Activated T-helper 2 cell treated with anti-CD3 and anti-CD28 coated beads, Interferon-gamma antibody, Interleukin-2, Interleukin-4, amounts not matched to agents 10 μg/mL and 5 μg/mL and 100 μg/mL, durations not matched to agents 14 hours and 24 hours and 36 hours (primary cell): ENCODE measurements at regions of chr1 and their contacts with region 1.

Region 1: DNA sequence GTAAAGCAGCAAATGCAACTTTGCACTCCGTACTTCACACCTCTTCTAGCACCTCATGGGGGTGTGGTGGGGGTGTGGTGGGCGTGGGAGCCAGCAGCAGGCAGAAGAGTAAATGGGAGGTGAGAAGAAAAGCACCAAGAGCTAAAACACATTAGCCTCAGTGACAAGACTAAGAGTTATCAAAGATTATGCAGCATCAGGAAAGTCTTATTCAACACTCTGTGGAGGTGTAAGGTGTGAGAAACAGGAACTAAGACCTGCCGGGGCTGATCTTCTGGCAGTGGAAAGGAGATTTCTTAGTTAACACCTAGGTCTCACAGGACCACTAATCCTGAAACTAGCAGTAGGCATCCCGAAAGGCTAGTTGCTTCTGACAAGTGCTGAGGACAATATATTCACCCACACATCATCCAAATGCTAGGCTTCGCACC is 9.9 kb downstream of the TGFBR3 start:
- DNase-seq: no peak
- H3K4me3 Mint-ChIP-seq: no peak overlapping the region
- H3K27ac Mint-ChIP-seq: peak overlapping the region; percentile 32
- H3K4me1 Mint-ChIP-seq: peaks cover 69% of the 10 kb centered on the region
- H3K27me3 Mint-ChIP-seq: peaks cover 2% of the 10 kb centered on the region

Region 2: DNA sequence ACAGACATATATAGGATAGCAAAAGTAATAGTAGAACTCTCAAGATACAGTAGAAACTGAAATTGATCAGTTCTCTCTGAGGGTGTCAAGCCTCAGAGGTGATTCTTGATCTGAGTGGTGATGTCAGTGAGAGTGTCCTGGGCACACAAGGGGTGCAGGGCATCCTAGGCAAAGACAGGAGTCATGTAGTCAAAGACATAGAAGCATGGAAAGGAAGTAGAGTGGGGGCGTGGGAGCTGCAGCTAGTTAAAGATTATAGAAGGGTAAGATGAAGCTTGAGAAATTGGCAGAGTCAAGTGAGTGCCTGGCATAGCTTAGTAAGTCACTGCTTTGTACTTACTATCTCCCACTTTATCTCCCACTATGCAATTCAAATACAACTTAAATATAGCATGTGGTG is 352.6 kb before region 1 on chr1:
- intact Hi-C with region 1: loop called (anchors 1 kb)
- DNase-seq: no peak
- H3K4me3 Mint-ChIP-seq: no peak overlapping the region
- H3K27ac Mint-ChIP-seq: peak overlapping the region; percentile 38
- H3K4me1 Mint-ChIP-seq: peaks cover 47% of the 10 kb centered on the region
- H3K27me3 Mint-ChIP-seq: no peaks in the 10 kb centered on the region

Region 3: GRCh38 chr1:91673613-91674012 is 202.4 kb before region 1 on chr1:
- intact Hi-C with region 1: loop called (anchors 2 kb)
- DNase-seq: no peak
- H3K4me3 Mint-ChIP-seq: no peak overlapping the region
- H3K27ac Mint-ChIP-seq: peak overlapping the region; percentile 71
- H3K4me1 Mint-ChIP-seq: peaks cover 33% of the 10 kb centered on the region
- H3K27me3 Mint-ChIP-seq: no peaks in the 10 kb centered on the region

Region 4: DNA sequence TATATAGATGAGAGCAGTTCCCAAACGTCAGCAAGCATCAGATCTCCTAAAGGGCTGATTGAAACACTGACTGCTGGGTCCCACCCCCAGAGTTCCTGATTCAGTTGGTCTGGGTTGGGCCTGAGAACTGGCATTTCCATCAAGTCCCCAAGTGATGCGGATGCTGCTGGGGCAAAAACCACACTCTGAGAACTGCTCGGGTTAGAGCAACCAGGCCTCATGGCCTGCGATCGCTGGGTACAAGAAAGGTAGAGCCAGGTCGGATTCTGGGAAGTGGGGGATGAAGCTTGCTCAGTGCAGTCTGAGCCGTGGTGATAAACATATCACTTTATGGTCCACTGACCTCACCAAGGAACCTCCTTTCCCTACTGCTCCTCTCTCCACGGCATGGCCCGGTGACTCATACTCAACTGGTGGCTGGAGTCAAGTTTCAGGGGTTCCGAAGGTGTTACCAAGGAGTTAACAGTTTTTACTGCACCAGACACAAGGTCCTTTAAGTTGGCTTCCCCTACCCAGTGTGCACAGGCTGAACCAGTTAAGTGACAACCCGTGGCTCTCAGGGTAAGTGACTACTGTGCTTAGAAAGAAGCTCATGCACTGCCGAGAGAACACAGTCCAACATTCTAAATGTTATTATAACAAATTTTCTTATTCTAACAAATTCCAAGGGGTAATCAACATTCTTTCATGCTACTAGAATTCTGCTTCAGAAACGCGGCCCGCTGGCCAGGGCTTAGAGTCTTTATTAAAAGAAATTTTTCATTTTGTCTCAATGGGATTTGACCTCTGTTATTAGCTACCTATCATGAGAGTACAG is 143.6 kb before region 1 on chr1:
- intact Hi-C with region 1: loop called (anchors 2 kb)
- DNase-seq: no peak
- H3K4me3 Mint-ChIP-seq: no peak overlapping the region
- H3K27ac Mint-ChIP-seq: peak overlapping the region; percentile 75
- H3K4me1 Mint-ChIP-seq: peaks cover 57% of the 10 kb centered on the region
- H3K27me3 Mint-ChIP-seq: no peaks in the 10 kb centered on the region

Region 5: DNA sequence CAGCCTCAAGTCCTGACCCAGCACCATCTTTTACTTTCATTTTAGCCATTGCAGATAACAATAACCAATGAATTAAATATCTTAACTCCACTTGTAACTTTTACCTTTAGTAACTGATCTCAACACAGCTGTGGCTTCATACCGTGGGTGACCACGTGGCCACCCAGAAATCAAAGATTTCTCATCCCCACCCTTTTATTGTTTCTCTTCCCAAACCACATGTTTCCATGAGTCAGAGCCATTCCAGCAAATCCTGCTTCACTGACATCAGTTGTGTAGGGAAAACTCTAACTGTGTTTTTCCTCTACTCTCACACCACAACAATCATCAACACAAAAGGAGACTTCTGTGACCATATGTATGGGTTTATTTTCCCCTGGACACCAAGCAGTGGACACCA is 48.1 kb after region 1 on chr1:
- intact Hi-C with region 1: loop called (anchors 10 kb)
- DNase-seq: no peak
- H3K4me3 Mint-ChIP-seq: no peak overlapping the region
- H3K27ac Mint-ChIP-seq: no peak overlapping the region
- H3K4me1 Mint-ChIP-seq: peaks cover 10% of the 10 kb centered on the region
- H3K27me3 Mint-ChIP-seq: no peaks in the 10 kb centered on the region